GM10248 (cell line): ENCODE measurements at regions of chr10 and their contacts with region 1.

Region 1: DNA sequence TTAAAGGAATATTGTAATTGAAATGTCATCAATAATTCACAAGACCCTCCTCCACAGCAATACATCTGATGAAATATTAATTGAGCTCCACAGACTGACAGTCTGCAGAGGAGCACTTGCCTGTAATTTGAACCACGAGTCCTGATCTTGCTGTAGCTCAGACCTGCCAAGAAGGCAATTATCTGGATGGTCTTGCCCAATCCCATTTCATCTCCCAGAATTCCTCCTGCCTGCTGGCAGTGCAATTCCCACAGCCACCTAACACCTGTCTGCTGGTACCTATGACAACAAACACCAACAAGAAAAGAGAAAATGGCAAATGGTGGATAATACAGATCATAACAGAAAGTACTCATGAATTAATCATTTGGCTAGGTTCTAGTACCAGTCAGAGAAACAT is 38.5 kb downstream of the ERCC6 start:
- DNase-seq: no peak
- CTCF ChIP-seq: no peak

Region 2: DNA sequence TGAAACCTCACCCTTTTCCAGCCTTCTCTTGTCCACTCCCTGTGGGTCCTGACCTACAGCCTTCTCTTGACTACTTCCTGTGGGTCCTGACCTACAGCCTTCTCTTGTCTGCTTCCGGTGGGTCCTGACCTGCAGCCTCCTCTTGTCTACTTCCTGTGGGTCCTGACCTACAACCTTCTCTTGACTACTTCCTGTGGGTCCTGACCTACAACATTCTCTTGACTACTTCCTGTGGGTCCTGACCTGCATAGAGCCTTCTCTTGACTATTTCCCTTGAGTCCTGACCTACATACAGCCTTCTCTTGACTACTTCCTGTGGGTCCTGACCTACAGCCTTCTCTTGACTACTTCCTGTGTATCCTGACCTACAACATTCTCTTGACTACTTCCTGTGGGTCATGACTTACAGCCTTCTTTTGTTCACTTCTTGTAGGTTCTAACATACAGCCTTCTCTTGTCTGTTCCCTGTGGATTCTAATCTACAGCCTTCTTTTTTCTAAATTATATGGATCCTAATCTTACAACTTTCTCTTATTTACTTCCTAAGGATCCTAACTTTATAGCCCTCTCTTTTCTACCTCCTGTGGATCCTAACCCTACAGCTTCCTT is 164.9 kb before region 1 on chr10:
- CTCF ChIA-PET with region 1: no interaction called
- POLR2A ChIA-PET with region 1: no interaction called
- DNase-seq: no peak
- CTCF ChIP-seq: no peak

Region 3: GRCh38 chr10:49512121-49512809 is 11.8 kb after region 1 on chr10:
- CTCF ChIA-PET with region 1: interaction called, 60 read pairs
- POLR2A ChIA-PET with region 1: no interaction called
- DNase-seq: no peak
- CTCF ChIP-seq: peak; percentile 33

Region 4: DNA sequence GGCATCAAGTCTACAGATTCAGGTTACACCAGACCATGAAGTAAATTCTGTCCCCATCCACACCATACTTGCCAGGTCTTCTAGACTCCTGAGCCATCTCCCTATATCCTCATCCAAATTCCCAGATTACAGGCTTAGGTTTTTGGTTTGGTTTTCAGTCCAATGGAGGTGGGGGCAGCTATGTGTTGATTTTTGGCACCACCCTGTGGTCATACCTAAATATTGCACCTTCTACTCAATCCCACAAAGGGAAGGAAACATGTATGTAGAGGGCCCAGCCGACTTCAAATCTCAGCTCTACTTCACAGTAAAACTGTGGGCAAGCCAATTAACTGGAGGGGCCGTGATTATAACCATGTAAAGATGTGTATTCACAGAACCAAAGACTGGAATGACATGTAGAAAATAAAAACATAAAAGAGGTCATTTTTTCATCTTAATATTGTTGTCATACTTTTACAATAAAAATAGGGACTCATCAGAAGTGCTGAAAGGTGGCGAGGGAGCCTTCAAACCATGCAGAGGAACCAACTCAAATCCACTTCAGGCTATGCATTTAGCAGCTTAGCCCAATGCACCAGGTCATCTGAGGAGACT is 18.7 kb after region 1 on chr10:
- CTCF ChIA-PET with region 1: interaction called, 60 read pairs
- POLR2A ChIA-PET with region 1: no interaction called
- DNase-seq: peak; percentile 42
- CTCF ChIP-seq: peak; percentile 49